Adrenal gland (tissue), 19 donors: ENCODE measurements at regions of chr18 and their contacts with region 1.

Region 1: DNA sequence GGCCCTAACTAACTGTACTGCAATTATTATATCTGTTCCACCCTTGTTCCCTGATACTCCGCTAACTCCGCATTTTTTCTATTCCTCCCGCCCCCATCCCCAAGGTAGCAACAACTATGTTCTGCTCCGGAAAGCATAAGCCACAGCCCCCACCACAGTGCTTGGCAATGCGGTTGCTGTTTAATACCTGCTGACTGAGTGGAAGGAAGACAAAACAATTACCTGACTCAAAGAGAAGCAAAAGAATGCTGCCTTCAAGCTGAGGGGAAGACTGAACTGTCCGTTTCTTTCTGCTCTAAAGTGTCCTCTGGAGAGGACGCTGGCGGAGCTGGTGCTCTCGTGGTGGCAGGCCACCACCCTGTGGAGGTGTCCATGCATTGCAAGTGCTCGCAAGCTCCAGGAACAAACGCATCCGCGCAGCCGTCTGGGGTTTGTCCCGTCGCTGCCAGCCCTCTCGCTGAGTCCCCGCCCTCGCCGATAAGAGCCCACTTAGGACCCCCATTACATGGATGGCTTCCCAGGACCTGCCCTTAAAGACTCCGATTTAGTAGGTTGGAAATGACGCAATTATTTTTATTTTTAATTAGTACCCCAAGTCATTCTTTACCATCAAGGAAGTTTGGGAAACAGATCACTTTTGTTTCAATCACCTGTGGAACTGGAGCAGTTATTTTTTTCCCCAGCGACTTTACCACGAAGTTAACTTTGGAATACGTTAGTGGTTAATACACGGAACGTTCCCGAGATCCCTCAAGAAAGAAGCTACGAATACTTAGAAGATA is 1.6 kb upstream of the MYL12A start:
- DNase-seq: peak; percentile 89 to 95 (median 92)
- H3K4me3 ChIP-seq: peak overlapping the region in 2 of 4 donors; percentile 21 to 66
- H3K27ac ChIP-seq: peak overlapping the region; percentile 69 to 100 (median 97)
- H3K4me1 ChIP-seq: peaks cover 14 to 38% of the 10 kb centered on the region in 2 donors
- H3K27me3 ChIP-seq: no peaks in the 10 kb centered on the region
- CTCF ChIP-seq: peak; percentile 90 to 98 (median 96)
- POLR2A ChIP-seq: peak in 1 of 2 donors; percentile 31

Region 2: DNA sequence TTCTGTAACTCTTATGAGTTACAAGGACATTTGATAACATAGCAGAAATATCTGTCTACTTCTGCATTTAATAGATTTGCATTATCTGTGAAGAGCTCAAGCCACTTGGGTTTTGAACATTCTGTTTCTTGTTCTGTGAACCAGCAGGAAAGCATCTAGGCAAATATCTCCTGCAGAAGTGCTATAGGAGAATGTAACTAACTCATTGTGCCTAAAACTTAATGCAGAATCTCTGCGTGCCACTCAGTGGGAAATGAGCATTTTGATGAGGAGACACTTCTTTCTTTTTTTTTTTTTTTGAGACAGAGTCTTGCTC is 89.8 kb before region 1 on chr18:
- intact Hi-C with region 1: loop called in 1 of 2 experiments (anchors 5 kb)
- DNase-seq: no peak
- H3K4me3 ChIP-seq: no peak overlapping the region
- H3K27ac ChIP-seq: peak overlapping the region in 3 of 5 donors; percentile 55 to 71 (median 60)
- H3K4me1 ChIP-seq: no peaks in the 10 kb centered on the region
- H3K27me3 ChIP-seq: no peaks in the 10 kb centered on the region
- CTCF ChIP-seq: no peak
- POLR2A ChIP-seq: no peak